Activated CD4-positive, alpha-beta memory T cell treated with anti-CD3 and anti-CD28 coated beads for 36 hours (primary cell): ENCODE measurements at regions of chr15 and their contacts with region 1.

Region 1: DNA sequence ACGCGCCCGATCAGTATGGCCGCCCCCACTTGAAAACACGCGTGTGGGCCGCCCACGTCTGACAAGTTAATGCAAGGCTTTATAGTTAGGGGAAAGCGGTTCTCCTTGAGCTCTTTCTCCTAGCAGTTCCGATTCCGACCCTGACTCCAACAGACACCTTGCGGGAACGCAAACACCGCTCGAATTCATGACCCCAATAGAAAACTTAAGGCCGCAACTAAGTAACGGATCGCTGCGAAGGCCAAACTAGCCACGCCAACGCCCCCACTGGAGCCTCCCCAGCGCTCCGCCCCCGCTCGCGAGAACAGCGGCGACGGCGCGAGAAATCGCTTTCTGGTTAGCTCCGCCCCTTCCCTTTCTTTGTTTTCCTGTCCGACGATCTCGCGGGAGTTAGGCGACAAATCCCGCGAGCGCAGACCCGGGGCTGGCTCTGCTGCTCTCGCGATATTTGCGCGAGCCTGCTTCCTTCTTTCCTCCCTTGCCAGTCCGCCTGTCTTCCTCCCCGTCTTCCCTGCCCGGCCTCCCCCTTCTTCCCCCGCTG is at the start of gene IREB2:
- DNase-seq: peak; percentile 99
- H3K4me3 Mint-ChIP-seq: peak within 1 kb of the TSS; percentile 97
- H3K27ac Mint-ChIP-seq: peak within 1 kb of the TSS; percentile 97
- H3K4me1 Mint-ChIP-seq: peaks cover 36% of the 10 kb centered on the region
- H3K27me3 Mint-ChIP-seq: no peaks in the 10 kb centered on the region
- total RNA-seq, gene IREB2: 52.8 to 53.7 TPM

Region 2: DNA sequence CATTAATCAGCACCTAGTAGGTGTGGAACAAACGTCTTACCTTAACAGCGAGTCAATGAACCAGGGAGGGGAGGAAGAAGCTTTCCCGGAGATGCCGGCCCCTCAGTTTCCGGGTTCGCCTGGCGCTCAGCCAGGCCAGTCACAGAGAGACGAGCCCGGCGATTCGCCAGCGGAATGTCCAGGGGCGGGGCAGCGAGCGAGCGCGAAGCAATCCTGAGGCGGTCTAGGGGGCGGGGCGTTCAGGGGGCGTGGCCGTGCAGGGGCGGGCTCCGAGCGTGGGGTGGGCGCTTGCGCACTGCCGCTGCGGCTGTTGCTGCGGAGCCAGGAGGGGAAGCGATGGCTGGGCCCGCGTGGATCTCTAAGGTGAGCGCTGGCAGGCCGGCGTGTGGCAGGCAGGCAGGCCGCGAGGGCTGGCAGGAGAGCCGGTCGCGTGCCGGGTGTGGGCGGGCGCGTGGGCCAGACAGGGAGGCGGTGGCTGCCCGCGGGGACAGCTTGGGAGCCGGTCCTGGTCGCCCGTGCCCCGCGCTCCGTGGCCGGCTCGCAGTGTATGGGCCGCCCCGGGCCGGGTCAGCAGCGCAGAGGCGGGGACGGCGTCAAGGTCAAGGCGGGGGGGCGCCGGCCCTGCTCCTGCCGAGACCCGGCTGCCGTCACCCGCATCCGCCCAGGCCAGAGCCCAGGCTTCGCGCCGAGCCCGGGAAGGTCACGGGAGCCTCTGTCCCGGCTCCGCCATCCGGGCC is 288.6 kb before region 1 on chr15 and contains the start of gene IDH3A:
- CTCF ChIA-PET with region 1: no interaction called
- POLR2A ChIA-PET with region 1: no interaction called
- intact Hi-C with region 1: loop called (anchors 5 kb)
- DNase-seq: peak; percentile 100
- H3K4me3 Mint-ChIP-seq: peak within 1 kb of the TSS; percentile 94
- H3K27ac Mint-ChIP-seq: peak within 1 kb of the TSS; percentile 86
- H3K4me1 Mint-ChIP-seq: peaks cover 40% of the 10 kb centered on the region
- H3K27me3 Mint-ChIP-seq: no peaks in the 10 kb centered on the region
- total RNA-seq, gene IDH3A: 106 to 111 TPM

Region 3: GRCh38 chr15:78299101-78299930 is 138.5 kb before region 1 on chr15 and contains the start of gene SKIC8:
- CTCF ChIA-PET with region 1: interaction called, 4 read pairs
- POLR2A ChIA-PET with region 1: interaction called, 14 read pairs
- intact Hi-C with region 1: loop called (anchors 5 kb)
- DNase-seq: peak; percentile 94
- H3K4me3 Mint-ChIP-seq: peak within 1 kb of the TSS; percentile 99
- H3K27ac Mint-ChIP-seq: peak within 1 kb of the TSS; percentile 84
- H3K4me1 Mint-ChIP-seq: peaks cover 40% of the 10 kb centered on the region
- H3K27me3 Mint-ChIP-seq: no peaks in the 10 kb centered on the region
- total RNA-seq, gene SKIC8: 50.1 to 51.3 TPM

Region 4: GRCh38 chr15:78506971-78507830 is 69.4 kb after region 1 on chr15 and contains the start of gene HYKK:
- CTCF ChIA-PET with region 1: no interaction called
- POLR2A ChIA-PET with region 1: interaction called, 4 read pairs
- intact Hi-C with region 1: loop called (anchors 1 kb)
- DNase-seq: peak; percentile 87
- H3K4me3 Mint-ChIP-seq: peak within 1 kb of the TSS; percentile 74
- H3K27ac Mint-ChIP-seq: no peak within 1 kb of the TSS
- H3K4me1 Mint-ChIP-seq: peaks cover 19% of the 10 kb centered on the region
- H3K27me3 Mint-ChIP-seq: no peaks in the 10 kb centered on the region
- total RNA-seq, gene HYKK: 2.2 to 2.7 TPM

Region 5: DNA sequence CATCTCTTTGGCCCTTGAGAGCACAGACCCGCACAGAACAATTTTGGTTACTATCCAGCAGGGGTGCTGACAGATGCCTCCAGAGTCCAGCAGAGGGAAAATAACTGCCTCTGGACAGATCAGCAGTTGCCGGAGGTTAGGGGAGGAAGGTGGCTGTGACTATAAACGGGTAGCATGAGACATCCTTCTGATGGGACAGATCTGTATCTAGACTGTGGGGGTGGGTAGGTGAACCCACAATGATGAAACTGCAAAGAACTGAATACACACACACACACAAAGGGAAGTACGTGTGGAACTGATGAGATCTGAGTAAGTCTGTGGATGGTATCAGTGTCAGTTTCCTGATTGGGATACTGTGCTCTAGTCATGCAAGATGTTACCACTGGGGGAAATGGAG is 352.2 kb after region 1 on chr15:
- CTCF ChIA-PET with region 1: no interaction called
- POLR2A ChIA-PET with region 1: no interaction called
- intact Hi-C with region 1: no loop called
- DNase-seq: peak; percentile 61
- H3K4me3 Mint-ChIP-seq: no peak overlapping the region
- H3K27ac Mint-ChIP-seq: peak overlapping the region; percentile 11
- H3K4me1 Mint-ChIP-seq: peaks cover 6% of the 10 kb centered on the region
- H3K27me3 Mint-ChIP-seq: no peaks in the 10 kb centered on the region

Region 6: DNA sequence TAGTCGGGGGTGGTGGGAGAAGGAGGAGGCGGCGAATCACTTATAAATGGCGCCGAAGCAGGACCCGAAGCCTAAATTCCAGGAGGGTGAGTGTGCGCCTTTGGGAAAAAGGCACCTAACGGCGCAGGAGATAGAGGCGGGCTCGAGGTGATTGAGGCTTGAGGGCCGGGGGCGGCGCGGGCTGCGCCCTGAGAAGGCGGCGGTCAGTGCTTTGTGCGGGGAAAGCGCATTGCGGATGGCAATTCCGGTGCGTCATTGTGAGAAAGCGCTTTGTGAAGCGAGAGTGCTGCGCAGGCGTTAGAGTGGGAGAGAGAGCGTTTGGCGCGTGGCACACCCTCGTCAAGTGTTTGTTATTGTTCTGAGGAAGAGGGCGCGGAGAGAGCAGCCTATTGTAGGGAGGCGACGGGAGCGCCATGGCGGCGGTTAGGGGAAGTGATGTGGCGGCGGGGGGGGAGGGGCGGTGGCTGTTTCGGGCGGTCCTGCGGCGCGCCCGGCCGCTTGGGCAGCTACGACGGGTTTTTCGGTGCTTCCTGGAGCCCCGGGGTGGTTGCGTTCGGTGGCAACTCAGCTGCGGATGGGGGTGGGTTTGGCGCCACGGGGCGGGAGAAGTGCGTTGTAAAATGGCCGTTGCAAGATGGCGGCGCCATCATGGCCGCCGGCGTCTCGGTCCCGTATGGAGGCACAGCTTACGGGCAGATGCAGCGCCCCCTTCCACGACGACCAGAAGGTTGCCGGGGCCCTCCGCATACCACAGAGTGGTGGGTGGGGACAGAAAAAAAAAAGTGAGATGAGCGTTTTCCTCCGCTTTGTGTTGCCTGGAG is 435.4 kb after region 1 on chr15:
- CTCF ChIA-PET with region 1: no interaction called
- POLR2A ChIA-PET with region 1: no interaction called
- intact Hi-C with region 1: loop called (anchors 5 kb)
- DNase-seq: peak; percentile 94
- H3K4me3 Mint-ChIP-seq: peak overlapping the region; percentile 90
- H3K27ac Mint-ChIP-seq: peak overlapping the region; percentile 99
- H3K4me1 Mint-ChIP-seq: peaks cover 37% of the 10 kb centered on the region
- H3K27me3 Mint-ChIP-seq: no peaks in the 10 kb centered on the region